ENCODE measurements at regions of chr5 and their contacts with region 1.

Region 1: DNA sequence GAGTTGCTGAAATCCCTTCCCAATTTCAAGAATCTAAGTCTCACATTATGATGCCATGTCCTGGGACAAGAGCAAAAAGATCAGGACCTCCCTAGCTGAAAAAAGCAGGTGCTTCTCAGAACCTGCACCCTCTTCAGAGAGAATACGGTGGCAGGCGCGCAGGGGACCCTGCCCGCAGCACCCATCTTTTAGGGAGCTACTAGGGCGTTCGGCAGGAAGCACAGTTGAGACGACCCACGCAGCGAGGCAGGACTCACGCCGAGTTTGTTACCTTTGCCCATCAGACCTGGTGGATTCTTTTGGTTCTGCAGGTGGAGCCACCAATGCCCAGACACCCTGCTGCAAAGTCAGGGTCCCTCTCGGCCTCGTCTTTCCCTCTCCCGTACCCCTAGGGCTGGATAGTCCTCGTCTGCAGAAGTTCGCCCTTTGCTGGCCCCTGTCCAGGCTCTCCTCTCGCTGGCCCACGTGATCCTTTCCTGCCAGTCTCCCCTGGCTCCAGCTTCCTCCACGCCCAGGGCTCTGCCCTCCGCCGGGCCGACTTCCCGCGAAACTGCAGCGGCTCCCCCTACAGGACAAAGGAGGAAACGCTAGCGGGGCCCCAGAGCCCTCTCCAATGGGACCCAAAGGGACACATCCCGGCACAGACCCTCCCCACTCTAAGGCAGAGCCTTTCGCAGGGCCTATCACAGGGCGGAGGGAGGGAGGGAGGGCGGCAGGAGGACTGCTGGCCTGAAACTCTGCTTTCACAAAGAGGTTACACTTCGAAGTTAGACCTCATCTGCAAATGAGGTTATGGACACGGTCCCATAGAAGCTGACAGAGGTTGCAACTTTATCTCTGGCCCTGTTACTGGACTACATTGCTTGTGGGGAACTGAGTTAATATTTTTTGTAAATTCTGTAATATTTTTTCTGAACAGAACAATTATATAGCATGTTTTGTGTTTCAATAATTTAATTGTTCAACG is 28.8 kb downstream of the TMEM174 start:
- DNase-seq: peak; percentile 62 to 84 (median 82)
- ATAC-seq: peak; percentile 99
- H3K4me3 ChIP-seq: no peak overlapping the region
- H3K27ac ChIP-seq: no peak overlapping the region
- H3K4me1 ChIP-seq: peaks cover 0 to 6% of the 10 kb centered on the region in 2 experiments; a peak in 3 of 5 replicates
- H3K27me3 ChIP-seq: peaks cover 20 to 42% of the 10 kb centered on the region in 2 experiments; a peak in 3 of 5 replicates
- CTCF ChIP-seq: peak; percentile 79 to 81 (median 81)
- EP300 ChIP-seq: no peak
- POLR2A ChIP-seq: no peak
- RAD21 ChIP-seq: peak; percentile 50 to 71

Region 2: GRCh38 chr5:73081093-73081492 is 120.7 kb before region 1 on chr5:
- CTCF ChIA-PET with region 1: interaction called, 3 read pairs
- POLR2A ChIA-PET with region 1: no interaction called
- in situ Hi-C with region 1: no loop called
- intact Hi-C with region 1: loop called (anchors 5 kb)
- DNase-seq: no peak
- ATAC-seq: no peak
- H3K4me3 ChIP-seq: no peak overlapping the region
- H3K27ac ChIP-seq: no peak overlapping the region
- H3K4me1 ChIP-seq: no peaks in the 10 kb centered on the region
- H3K27me3 ChIP-seq: no peaks in the 10 kb centered on the region
- CTCF ChIP-seq: no peak
- EP300 ChIP-seq: no peak
- POLR2A ChIP-seq: no peak
- RAD21 ChIP-seq: no peak

Region 3: GRCh38 chr5:73135429-73136054 is 66.3 kb before region 1 on chr5:
- CTCF ChIA-PET with region 1: no interaction called
- POLR2A ChIA-PET with region 1: no interaction called
- in situ Hi-C with region 1: no loop called
- intact Hi-C with region 1: loop called (anchors 5 kb)
- DNase-seq: peak; percentile 43 to 54 (median 52)
- ATAC-seq: peak; percentile 87
- H3K4me3 ChIP-seq: no peak overlapping the region
- H3K27ac ChIP-seq: no peak overlapping the region
- H3K4me1 ChIP-seq: peaks cover 0 to 3% of the 10 kb centered on the region in 2 experiments; a peak in 2 of 5 replicates
- H3K27me3 ChIP-seq: peaks cover 8 to 28% of the 10 kb centered on the region in 2 experiments; a peak in 4 of 5 replicates
- CTCF ChIP-seq: peak; percentile 46 to 55 (median 54); a peak in 5 of 6 replicates
- EP300 ChIP-seq: no peak
- POLR2A ChIP-seq: no peak
- RAD21 ChIP-seq: peak in 1 of 2 experiments; percentile 45; a peak in 2 of 4 replicates

Region 4: DNA sequence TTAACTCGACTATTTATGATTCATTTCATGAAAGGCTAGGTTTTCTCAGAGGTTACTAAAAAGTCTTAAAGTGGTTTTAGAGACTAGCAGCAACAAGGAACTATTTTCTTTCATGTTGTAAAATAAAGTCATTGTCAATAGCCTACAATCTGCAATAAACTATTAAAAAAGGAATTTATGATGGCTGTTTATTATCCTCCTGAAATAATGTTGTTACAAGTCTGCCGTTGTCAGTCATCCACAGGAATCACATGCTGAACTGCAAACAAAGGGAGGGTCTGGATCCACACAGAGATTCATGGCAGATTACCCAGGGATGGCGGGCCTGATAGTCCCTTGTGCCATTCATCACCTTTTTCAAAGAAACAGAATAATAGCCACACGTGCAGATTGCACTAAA is 20.3 kb after region 1 on chr5:
- CTCF ChIA-PET with region 1: no interaction called
- POLR2A ChIA-PET with region 1: no interaction called
- in situ Hi-C with region 1: no loop called
- intact Hi-C with region 1: no loop called
- DNase-seq: no peak
- ATAC-seq: no peak
- H3K4me3 ChIP-seq: no peak overlapping the region
- H3K27ac ChIP-seq: no peak overlapping the region
- H3K4me1 ChIP-seq: no peaks in the 10 kb centered on the region
- H3K27me3 ChIP-seq: peaks cover 4 to 5% of the 10 kb centered on the region in 2 experiments; a peak in 2 of 5 replicates
- CTCF ChIP-seq: no peak
- EP300 ChIP-seq: no peak
- POLR2A ChIP-seq: no peak
- RAD21 ChIP-seq: no peak

Measured in K562 (cell line).